Activated CD8-positive, alpha-beta T cell treated with anti-CD3 and anti-CD28 coated beads for 36 hours (primary cell): ENCODE measurements at regions of chr18 and their contacts with region 1.

Region 1: GRCh38 chr18:22930089-22930713 is 2.9 kb upstream of the RBBP8 start:
- DNase-seq: peak; percentile 93
- ATAC-seq: peak; percentile 59
- H3K4me3 Mint-ChIP-seq: no peak overlapping the region
- H3K27ac Mint-ChIP-seq: no peak overlapping the region
- H3K4me1 Mint-ChIP-seq: peaks cover 12% of the 10 kb centered on the region
- H3K27me3 Mint-ChIP-seq: peaks cover 7% of the 10 kb centered on the region
- CTCF ChIP-seq: peak; percentile 76

Region 2: DNA sequence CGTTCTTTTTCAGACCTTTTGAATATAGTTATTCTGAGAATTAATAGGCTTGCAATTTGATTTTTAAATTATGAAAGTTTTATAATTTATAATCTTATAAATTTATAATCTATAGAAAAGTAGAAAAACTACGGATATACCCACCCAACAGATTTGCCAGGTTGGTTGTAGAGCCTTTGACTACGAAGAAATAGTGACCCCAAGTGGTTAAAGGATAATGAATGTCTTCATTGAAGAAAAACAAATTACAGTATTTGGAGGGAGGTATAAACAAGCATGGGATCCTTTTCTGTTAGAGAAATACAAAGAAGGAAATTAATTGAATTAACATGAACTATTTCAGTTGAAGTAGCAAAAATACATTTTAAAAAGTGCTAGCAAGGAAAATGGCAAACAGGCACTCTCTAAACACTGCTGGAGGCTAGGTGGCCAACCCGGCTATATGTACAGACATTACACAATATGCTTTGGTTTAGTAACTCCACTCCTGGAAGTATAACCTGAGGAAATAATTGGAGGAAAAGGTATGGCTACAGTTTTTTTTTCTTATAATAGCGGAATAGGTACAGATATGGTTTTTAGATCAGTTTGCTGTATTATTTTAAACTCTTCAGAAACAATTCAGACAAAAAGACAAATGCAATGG is 1078.8 kb before region 1 on chr18:
- CTCF ChIA-PET with region 1: no interaction called
- POLR2A ChIA-PET with region 1: no interaction called
- intact Hi-C with region 1: no loop called
- DNase-seq: no peak
- ATAC-seq: no peak
- H3K4me3 Mint-ChIP-seq: no peak overlapping the region
- H3K27ac Mint-ChIP-seq: no peak overlapping the region
- H3K4me1 Mint-ChIP-seq: peaks cover 7% of the 10 kb centered on the region
- H3K27me3 Mint-ChIP-seq: no peaks in the 10 kb centered on the region
- CTCF ChIP-seq: peak; percentile 32

Region 3: GRCh38 chr18:22913857-22914256 is 16.3 kb before region 1 on chr18:
- CTCF ChIA-PET with region 1: interaction called, 10 read pairs
- POLR2A ChIA-PET with region 1: no interaction called
- intact Hi-C with region 1: no loop called
- DNase-seq: no peak
- ATAC-seq: no peak
- H3K4me3 Mint-ChIP-seq: no peak overlapping the region
- H3K27ac Mint-ChIP-seq: no peak overlapping the region
- H3K4me1 Mint-ChIP-seq: no peaks in the 10 kb centered on the region
- H3K27me3 Mint-ChIP-seq: peaks cover 3% of the 10 kb centered on the region
- CTCF ChIP-seq: no peak